Body of pancreas (tissue), 4 donors: ENCODE measurements at regions of chr6 and their contacts with region 1.

Region 1: DNA sequence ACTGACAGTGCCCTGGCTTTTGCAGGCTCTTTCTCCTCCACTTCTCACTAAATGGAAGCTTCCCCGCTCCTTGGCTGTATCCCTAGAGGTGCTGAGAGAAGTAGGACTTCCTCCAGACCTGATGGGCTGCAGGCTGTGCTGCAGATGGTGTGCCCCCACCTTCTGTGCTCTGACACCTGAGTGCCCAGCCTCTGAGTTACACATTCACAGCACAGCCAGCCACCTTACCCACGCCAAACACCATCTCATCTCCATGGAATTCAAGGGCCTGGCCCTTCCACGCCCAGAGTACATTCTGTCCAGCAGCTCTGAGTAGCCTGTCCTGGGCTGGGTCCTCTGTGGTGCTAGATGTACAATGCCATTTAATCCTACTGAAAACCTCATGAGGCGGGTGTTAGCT is 5.3 kb downstream of the SFTA2 start:
- DNase-seq: peak; percentile 55 to 85 (median 72)
- ATAC-seq: peak; percentile 93
- H3K4me3 ChIP-seq: no peak overlapping the region
- H3K27ac ChIP-seq: peak overlapping the region; percentile 28 to 78 (median 60)
- H3K4me1 ChIP-seq: peaks cover 23% of the 10 kb centered on the region
- H3K27me3 ChIP-seq: no peaks in the 10 kb centered on the region
- CTCF ChIP-seq: no peak
- POLR2A ChIP-seq: peak in 2 of 3 donors; percentile 24 to 36

Region 2: GRCh38 chr6:31058128-31058894 is 131.7 kb after region 1 on chr6:
- intact Hi-C with region 1: loop called (anchors 10 kb)
- DNase-seq: no peak
- ATAC-seq: peak; percentile 60
- H3K4me3 ChIP-seq: no peak overlapping the region
- H3K27ac ChIP-seq: no peak overlapping the region
- H3K4me1 ChIP-seq: peaks cover 9% of the 10 kb centered on the region
- H3K27me3 ChIP-seq: no peaks in the 10 kb centered on the region
- CTCF ChIP-seq: peak; percentile 22 to 61 (median 51)
- POLR2A ChIP-seq: no peak